Motor neuron (in vitro differentiated cells): ENCODE measurements at regions of chr3 and their contacts with region 1.

Region 1: GRCh38 chr3:15268033-15268631 is 62.1 kb downstream of the CAPN7 start:
- ATAC-seq: peak; percentile 27 to 80 (median 73)
- H3K4me3 ChIP-seq: no peak overlapping the region
- H3K27ac ChIP-seq: no peak overlapping the region
- H3K4me1 ChIP-seq: no peaks in the 10 kb centered on the region

Region 2: GRCh38 chr3:14988988-14989394 is 279.1 kb before region 1 on chr3:
- in situ Hi-C with region 1: no loop called
- ATAC-seq: peak in 1 of 8 experiments; percentile 22
- H3K4me3 ChIP-seq: no peak overlapping the region
- H3K27ac ChIP-seq: no peak overlapping the region
- H3K4me1 ChIP-seq: peaks cover 4 to 10% of the 10 kb centered on the region in 2 donors

Region 3: DNA sequence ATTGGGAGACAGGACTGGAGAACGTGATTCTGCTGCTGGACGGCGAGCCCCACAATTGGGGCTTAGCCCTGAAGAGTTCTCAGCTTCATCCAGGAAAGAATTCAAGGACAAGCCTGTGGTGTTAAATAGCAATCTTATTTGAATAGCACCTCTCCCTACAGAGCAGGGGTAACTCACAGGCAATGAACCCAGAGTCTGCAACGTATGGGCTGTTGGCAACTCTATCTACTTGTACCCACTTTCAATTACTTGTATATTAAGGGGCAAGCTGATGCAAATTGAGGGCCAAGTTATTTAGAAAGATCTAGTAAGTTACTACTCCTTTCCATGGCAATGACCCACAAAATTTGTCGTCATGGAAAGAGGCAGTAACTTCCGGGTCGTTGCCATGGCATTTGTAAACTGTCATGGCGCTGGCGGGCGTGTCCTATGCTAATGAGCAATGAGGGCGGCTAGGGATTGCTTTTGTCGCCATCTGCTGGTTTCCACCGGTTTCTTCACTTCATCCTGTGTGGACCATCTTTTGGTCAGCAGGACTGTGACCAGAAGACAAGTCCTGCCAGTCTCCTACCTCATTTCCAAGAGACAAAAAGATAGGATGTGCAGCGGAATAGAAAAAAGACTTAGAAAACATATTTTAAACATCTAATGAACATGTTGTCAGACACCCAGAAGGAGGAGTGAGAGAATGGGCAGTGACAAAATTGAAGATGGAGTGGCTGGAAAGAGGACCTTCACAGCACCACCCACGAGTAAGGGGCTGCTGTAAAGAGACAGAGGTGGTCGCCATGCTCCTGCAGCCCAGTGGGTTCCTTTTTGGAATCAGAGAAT is 110.0 kb after region 1 on chr3:
- in situ Hi-C with region 1: loop called in 4 of 9 experiments (anchors 10 to 25 kb)
- ATAC-seq: peak; percentile 88 to 100 (median 96)
- H3K4me3 ChIP-seq: no peak overlapping the region
- H3K27ac ChIP-seq: no peak overlapping the region
- H3K4me1 ChIP-seq: no peaks in the 10 kb centered on the region

Region 4: GRCh38 chr3:15384510-15385237 is 116.5 kb after region 1 on chr3:
- in situ Hi-C with region 1: loop called in 4 of 9 experiments (anchors 10 to 25 kb)
- ATAC-seq: peak in 2 of 8 experiments; percentile 4
- H3K4me3 ChIP-seq: no peak overlapping the region
- H3K27ac ChIP-seq: no peak overlapping the region
- H3K4me1 ChIP-seq: no peaks in the 10 kb centered on the region

Region 5: GRCh38 chr3:15405448-15406050 is 137.4 kb after region 1 on chr3:
- in situ Hi-C with region 1: loop called in 2 of 9 experiments (anchors 10 to 25 kb)
- ATAC-seq: peak in 3 of 8 experiments; percentile 65 to 79 (median 68)
- H3K4me3 ChIP-seq: no peak overlapping the region
- H3K27ac ChIP-seq: no peak overlapping the region
- H3K4me1 ChIP-seq: no peaks in the 10 kb centered on the region

Region 6: DNA sequence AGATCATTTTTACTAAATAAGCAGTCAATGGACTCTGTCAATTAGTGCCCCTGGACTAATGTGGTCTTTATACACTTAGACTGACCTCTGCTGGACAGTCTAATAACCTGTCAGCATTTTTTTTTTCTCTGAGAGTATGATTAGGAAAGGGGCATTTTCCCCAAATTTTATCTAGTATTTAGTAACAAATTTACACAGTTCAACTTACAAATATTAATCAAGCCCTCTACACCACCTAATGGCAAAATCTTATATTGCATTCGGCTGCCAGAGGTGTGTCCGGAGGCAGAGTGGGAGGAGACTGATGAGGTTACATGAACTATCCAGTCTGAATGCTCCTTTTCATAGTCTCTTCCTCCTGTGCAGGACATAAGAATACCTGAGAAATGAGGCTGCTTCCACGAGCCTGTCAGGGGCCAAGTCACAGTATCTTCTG is 289.4 kb after region 1 on chr3:
- in situ Hi-C with region 1: loop called in 4 of 9 experiments (anchors 25 kb)
- ATAC-seq: peak; percentile 52 to 97 (median 88)
- H3K4me3 ChIP-seq: no peak overlapping the region
- H3K27ac ChIP-seq: no peak overlapping the region
- H3K4me1 ChIP-seq: no peaks in the 10 kb centered on the region

Region 7: DNA sequence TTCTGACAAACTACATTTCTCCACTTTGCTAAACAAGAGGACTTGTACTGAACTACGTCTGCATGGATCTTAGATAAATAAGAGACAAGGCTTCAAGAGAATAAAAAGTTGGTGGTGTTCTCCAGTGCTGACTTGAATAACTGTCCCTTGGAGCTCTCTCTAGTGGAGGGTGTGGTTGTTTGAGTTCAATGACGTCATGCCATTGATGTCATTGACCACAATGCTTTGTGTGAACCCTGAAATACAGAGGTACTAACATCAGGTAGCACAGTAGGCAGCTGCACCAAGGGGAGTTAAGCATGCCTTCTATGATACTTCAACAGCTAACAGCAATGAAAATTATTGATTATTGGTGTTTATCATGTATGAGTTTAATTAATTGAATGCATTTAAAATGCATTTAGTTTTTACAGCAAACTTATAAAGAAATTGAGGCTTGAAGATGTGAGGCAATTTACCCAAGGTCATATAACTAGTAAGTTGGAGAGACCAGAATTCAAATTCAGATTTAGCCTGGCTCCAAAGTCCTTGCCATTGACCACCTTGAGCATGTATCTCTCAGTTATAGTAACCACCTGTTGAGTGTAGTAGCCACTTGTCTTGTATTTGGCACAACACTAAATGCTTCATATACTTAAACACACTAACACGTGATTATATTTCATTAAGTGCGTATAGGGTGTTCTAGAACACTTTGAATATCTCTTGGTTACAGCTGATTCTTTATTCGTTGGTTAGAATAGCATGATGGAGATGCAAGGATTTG is 655.7 kb after region 1 on chr3:
- in situ Hi-C with region 1: no loop called
- ATAC-seq: peak in 1 of 8 experiments; percentile 45
- H3K4me3 ChIP-seq: no peak overlapping the region
- H3K27ac ChIP-seq: no peak overlapping the region
- H3K4me1 ChIP-seq: no peaks in the 10 kb centered on the region